A673 (cell line): ENCODE measurements at regions of chr7 and their contacts with region 1.

Region 1: GRCh38 chr7:30074422-30075030 is 46.3 kb downstream of the PLEKHA8 start:
- DNase-seq: peak; percentile 51
- H3K4me3 ChIP-seq: no peak overlapping the region
- H3K27ac ChIP-seq: no peak overlapping the region
- H3K4me1 ChIP-seq: no peaks in the 10 kb centered on the region
- H3K27me3 ChIP-seq: no peaks in the 10 kb centered on the region
- CTCF ChIP-seq: peak; percentile 63

Region 2: GRCh38 chr7:30088362-30088761 is 13.8 kb after region 1 on chr7:
- CTCF ChIA-PET with region 1: no interaction called
- POLR2A ChIA-PET with region 1: interaction called, 14 read pairs
- intact Hi-C with region 1: no loop called
- DNase-seq: no peak
- H3K4me3 ChIP-seq: no peak overlapping the region
- H3K27ac ChIP-seq: no peak overlapping the region
- H3K4me1 ChIP-seq: no peaks in the 10 kb centered on the region
- H3K27me3 ChIP-seq: no peaks in the 10 kb centered on the region
- CTCF ChIP-seq: no peak